HEK293 (cell line): ENCODE measurements at regions of chr3 and their contacts with region 1.

Region 1: GRCh38 chr3:191051037-191051436 is 148.0 kb upstream of the OSTN start:
- H3K4me3 ChIP-seq: no peak overlapping the region
- H3K27ac ChIP-seq: no peak overlapping the region
- H3K4me1 ChIP-seq: no peaks in the 10 kb centered on the region
- CTCF ChIP-seq: no peak

Region 2: GRCh38 chr3:190701096-190701532 is 349.9 kb before region 1 on chr3:
- CTCF ChIA-PET with region 1: interaction called, 13 read pairs
- POLR2A ChIA-PET with region 1: no interaction called
- H3K4me3 ChIP-seq: no peak overlapping the region
- H3K27ac ChIP-seq: no peak overlapping the region
- H3K4me1 ChIP-seq: no peaks in the 10 kb centered on the region
- CTCF ChIP-seq: peak; percentile 56; the same call in 1 of the 2 replicates

Region 3: GRCh38 chr3:190811775-190812480 is 239.1 kb before region 1 on chr3:
- CTCF ChIA-PET with region 1: interaction called, 32 read pairs
- POLR2A ChIA-PET with region 1: no interaction called
- H3K4me3 ChIP-seq: no peak overlapping the region
- H3K27ac ChIP-seq: no peak overlapping the region
- H3K4me1 ChIP-seq: no peaks in the 10 kb centered on the region; the same call in 1 of the 2 replicates
- CTCF ChIP-seq: no peak

Region 4: GRCh38 chr3:190883973-190884832 is 166.8 kb before region 1 on chr3:
- CTCF ChIA-PET with region 1: interaction called, 22 read pairs
- POLR2A ChIA-PET with region 1: no interaction called
- H3K4me3 ChIP-seq: no peak overlapping the region
- H3K27ac ChIP-seq: no peak overlapping the region
- H3K4me1 ChIP-seq: no peaks in the 10 kb centered on the region
- CTCF ChIP-seq: no peak

Region 5: DNA sequence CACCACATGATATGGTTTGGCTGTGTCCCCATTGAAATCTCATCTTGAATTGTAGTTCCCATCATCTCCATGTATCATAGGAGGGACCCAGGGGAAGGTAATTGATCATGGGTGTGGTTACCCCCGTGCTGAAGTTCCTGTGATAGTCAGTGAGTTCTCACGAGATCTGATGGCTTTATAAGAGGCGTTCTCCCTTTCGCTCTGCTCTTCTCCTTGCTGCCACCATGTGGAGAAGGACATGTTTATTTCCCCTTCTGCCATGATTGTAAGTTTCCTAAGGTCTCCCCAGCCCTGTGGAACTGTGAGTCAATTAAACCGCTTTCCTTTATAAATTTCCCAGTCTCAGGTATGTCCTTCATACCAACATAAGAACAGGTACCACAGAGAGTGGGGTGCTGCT is 169.9 kb after region 1 on chr3:
- CTCF ChIA-PET with region 1: no interaction called
- POLR2A ChIA-PET with region 1: no interaction called
- H3K4me3 ChIP-seq: no peak overlapping the region
- H3K27ac ChIP-seq: no peak overlapping the region
- H3K4me1 ChIP-seq: no peaks in the 10 kb centered on the region
- CTCF ChIP-seq: no peak